Endothelial cell of umbilical vein (primary cell): ENCODE measurements at regions of chr6 and their contacts with region 1.

Region 1: DNA sequence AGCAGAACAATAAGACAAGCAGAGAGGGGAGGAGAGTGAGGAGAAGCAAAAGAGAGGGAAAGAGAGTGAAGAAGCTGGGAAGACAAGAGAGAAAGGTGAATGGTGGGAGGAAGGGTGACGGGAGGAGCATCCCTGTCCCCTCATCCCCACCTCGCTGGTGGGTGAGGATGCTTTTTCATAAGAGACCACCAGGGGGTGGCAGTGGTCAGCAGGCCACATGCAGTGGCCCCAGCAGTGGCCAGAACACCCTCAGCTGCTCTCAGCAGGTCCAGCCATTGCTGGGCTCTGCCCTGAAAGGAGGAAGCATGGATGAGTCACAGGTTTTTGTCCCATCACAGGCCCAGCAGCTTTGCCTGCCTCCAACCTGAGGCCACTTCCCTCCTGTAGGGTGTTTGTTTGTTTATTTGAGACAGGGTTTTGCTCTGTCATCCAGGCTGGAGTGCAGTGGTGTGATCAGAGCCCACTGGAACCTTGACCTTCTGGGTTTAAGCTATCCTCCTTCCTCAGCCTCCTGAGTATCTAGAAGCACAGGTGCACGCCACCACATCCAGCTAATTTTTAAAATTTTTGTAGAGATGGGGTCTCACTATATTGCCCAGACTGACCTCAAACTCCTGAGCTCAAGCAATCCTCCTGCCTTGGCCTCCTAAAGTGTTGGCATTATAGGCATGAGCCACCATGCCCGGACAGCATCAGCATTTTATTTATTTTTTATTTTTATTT is 24.0 kb downstream of the FGD2 start:
- DNase-seq: peak; percentile 77
- H3K4me3 ChIP-seq: no peak overlapping the region
- H3K27ac ChIP-seq: no peak overlapping the region
- H3K4me1 ChIP-seq: no peaks in the 10 kb centered on the region
- H3K27me3 ChIP-seq: peaks cover 0 to 3% of the 10 kb centered on the region in 2 experiments
- CTCF ChIP-seq: peak; percentile 70 to 79
- POLR2A ChIP-seq: no peak

Region 2: GRCh38 chr6:36874443-36875249 is 154.8 kb before region 1 on chr6 and contains the start of gene PPIL1:
- CTCF ChIA-PET with region 1: no interaction called
- POLR2A ChIA-PET with region 1: no interaction called
- dilution Hi-C with region 1: no loop called
- intact Hi-C with region 1: no loop called
- DNase-seq: peak; percentile 93
- H3K4me3 ChIP-seq: peak within 1 kb of the TSS; percentile 63 to 95 (median 67)
- H3K27ac ChIP-seq: peak within 1 kb of the TSS; percentile 82
- H3K4me1 ChIP-seq: peaks cover 12% of the 10 kb centered on the region
- H3K27me3 ChIP-seq: no peaks in the 10 kb centered on the region
- CTCF ChIP-seq: peak in 1 of 2 donors; percentile 2
- POLR2A ChIP-seq: peak; percentile 59
- total RNA-seq, gene PPIL1: 33.8 and 35.6 TPM in 2 replicates

Region 3: GRCh38 chr6:37051138-37052026 is 22.0 kb after region 1 on chr6:
- CTCF ChIA-PET with region 1: interaction called, 62 read pairs
- POLR2A ChIA-PET with region 1: interaction called, 3 read pairs
- dilution Hi-C with region 1: no loop called
- intact Hi-C with region 1: loop called (anchors 1 kb)
- DNase-seq: peak; percentile 79
- H3K4me3 ChIP-seq: no peak overlapping the region
- H3K27ac ChIP-seq: no peak overlapping the region
- H3K4me1 ChIP-seq: no peaks in the 10 kb centered on the region
- H3K27me3 ChIP-seq: peaks cover 0 to 4% of the 10 kb centered on the region in 2 experiments
- CTCF ChIP-seq: peak; percentile 81 to 93
- POLR2A ChIP-seq: no peak

Region 4: DNA sequence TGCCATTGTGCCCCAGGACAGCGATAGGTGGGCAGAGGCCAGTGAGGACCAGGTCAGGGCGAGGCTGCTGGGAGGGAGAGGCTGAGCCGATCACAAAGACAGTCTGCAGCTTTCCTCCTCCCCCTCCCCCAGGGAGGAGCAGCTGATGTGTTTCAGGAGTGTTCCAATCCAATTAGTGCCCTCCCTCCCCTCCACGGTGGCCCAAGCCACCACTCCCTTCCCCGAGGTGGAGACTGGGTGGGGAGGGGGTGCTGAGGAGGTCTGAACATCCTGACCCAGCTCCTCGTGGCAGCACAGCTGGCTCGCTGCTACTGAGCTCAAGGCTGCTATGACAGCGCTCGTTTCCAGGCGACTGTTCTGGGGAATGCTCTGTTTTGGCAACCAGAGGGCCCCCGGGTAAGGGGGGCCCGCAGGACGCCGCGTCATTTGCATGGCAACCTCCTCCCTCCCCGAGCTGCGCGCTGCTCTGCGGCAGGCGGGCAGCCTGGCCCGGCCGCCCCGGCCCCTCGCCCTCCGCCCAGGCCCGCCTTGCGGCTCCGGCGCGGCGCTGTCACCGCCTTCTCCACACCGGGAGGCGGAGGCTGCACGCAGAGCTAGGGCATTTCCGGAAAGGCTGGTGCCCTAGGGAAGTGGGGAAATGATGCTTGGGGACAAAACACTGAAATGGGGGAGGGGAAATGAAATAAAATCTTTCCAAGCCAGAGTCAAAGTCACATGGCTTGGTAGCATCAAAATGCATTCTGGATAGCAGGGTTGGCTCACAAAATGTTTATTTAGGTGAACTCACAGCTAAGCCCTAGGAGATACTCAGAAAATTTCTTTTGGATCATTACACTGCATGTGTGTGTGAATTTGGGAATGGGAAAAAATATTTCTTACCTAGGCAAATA is 73.1 kb after region 1 on chr6:
- CTCF ChIA-PET with region 1: no interaction called
- POLR2A ChIA-PET with region 1: no interaction called
- dilution Hi-C with region 1: no loop called
- intact Hi-C with region 1: loop called (anchors 2 kb)
- DNase-seq: peak; percentile 83
- H3K4me3 ChIP-seq: peak overlapping the region; percentile 15 to 63 (median 22)
- H3K27ac ChIP-seq: peak overlapping the region; percentile 72
- H3K4me1 ChIP-seq: peaks cover 18% of the 10 kb centered on the region
- H3K27me3 ChIP-seq: no peaks in the 10 kb centered on the region
- CTCF ChIP-seq: no peak
- POLR2A ChIP-seq: peak; percentile 33

Region 5: GRCh38 chr6:37257634-37258404 is 228.4 kb after region 1 on chr6 and contains the starts of genes TBC1D22B and TMEM217:
- CTCF ChIA-PET with region 1: no interaction called
- POLR2A ChIA-PET with region 1: no interaction called
- dilution Hi-C with region 1: no loop called
- intact Hi-C with region 1: loop called (anchors 1 kb)
- DNase-seq: peak; percentile 96
- H3K4me3 ChIP-seq: peak within 1 kb of the TSS; percentile 70 to 98 (median 80)
- H3K27ac ChIP-seq: peak within 1 kb of the TSS; percentile 97
- H3K4me1 ChIP-seq: peaks cover 22% of the 10 kb centered on the region
- H3K27me3 ChIP-seq: no peaks in the 10 kb centered on the region
- CTCF ChIP-seq: no peak
- POLR2A ChIP-seq: peak; percentile 64
- total RNA-seq, gene TBC1D22B: 12.7 and 13.6 TPM in 2 replicates
- total RNA-seq, gene TMEM217: 6.5 and 6.8 TPM in 2 replicates

Region 6: GRCh38 chr6:37314487-37315156 is 285.2 kb after region 1 on chr6:
- CTCF ChIA-PET with region 1: no interaction called
- POLR2A ChIA-PET with region 1: no interaction called
- dilution Hi-C with region 1: no loop called
- intact Hi-C with region 1: loop called (anchors 10 kb)
- DNase-seq: peak; percentile 93
- H3K4me3 ChIP-seq: no peak overlapping the region
- H3K27ac ChIP-seq: peak overlapping the region; percentile 34
- H3K4me1 ChIP-seq: no peaks in the 10 kb centered on the region
- H3K27me3 ChIP-seq: no peaks in the 10 kb centered on the region
- CTCF ChIP-seq: peak; percentile 64 to 78
- POLR2A ChIP-seq: no peak